T-cell (primary cell): ENCODE measurements at regions of chr6 and their contacts with region 1.

Region 1: GRCh38 chr6:20542927-20543602 is 8.8 kb downstream of the CDKAL1 start:
- DNase-seq: no peak
- ATAC-seq: peak in 1 of 4 experiments; percentile 35
- H3K4me3 ChIP-seq: no peak overlapping the region
- H3K4me3 Mint-ChIP-seq: no peak overlapping the region
- H3K27ac ChIP-seq: no peak overlapping the region
- H3K27ac Mint-ChIP-seq: no peak overlapping the region
- H3K4me1 ChIP-seq: peaks cover 0 to 6% of the 10 kb centered on the region in 2 experiments
- H3K4me1 Mint-ChIP-seq: peaks cover 41 to 51% (median 43%) of the 10 kb centered on the region in 3 donors
- H3K27me3 ChIP-seq: no peaks in the 10 kb centered on the region
- H3K27me3 Mint-ChIP-seq: no peaks in the 10 kb centered on the region

Region 2: DNA sequence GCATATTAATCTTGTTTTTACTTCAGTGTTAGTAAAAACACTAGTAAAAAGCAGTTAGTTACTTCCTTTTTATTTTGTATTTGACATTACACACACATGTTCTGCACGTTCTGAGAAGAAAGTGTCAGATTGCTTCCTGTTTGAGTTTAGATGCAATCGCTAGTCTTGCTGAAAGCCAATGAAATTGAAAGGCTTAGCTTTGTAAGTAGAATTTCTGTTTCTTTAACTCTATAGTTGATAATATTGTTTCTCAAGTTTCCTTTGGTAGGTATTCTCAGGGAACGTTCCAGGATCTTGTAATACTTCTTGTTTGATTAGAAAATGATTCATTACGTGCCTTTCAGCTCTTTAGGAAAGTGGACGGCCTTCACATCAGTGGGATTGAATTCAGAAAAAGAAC is 46.2 kb after region 1 on chr6:
- CTCF ChIA-PET with region 1: no interaction called
- POLR2A ChIA-PET with region 1: interaction called in 1 of 2 experiments, 21 read pairs
- DNase-seq: peak in 1 of 35 experiments; percentile 4
- ATAC-seq: no peak
- H3K4me3 ChIP-seq: no peak overlapping the region
- H3K4me3 Mint-ChIP-seq: peak overlapping the region in 1 of 3 donors; percentile 17
- H3K27ac ChIP-seq: no peak overlapping the region
- H3K27ac Mint-ChIP-seq: no peak overlapping the region
- H3K4me1 ChIP-seq: peaks cover 0 to 7% of the 10 kb centered on the region in 2 experiments
- H3K4me1 Mint-ChIP-seq: peaks cover 24 to 29% (median 28%) of the 10 kb centered on the region in 3 donors
- H3K27me3 ChIP-seq: no peaks in the 10 kb centered on the region
- H3K27me3 Mint-ChIP-seq: no peaks in the 10 kb centered on the region